ENCODE measurements at regions of chr17 and their contacts with region 1.

Region 1: GRCh38 chr17:79892459-79892858 is 53.2 kb upstream of the CBX4 start:
- DNase-seq: no peak
- CTCF ChIP-seq: no peak

Region 2: DNA sequence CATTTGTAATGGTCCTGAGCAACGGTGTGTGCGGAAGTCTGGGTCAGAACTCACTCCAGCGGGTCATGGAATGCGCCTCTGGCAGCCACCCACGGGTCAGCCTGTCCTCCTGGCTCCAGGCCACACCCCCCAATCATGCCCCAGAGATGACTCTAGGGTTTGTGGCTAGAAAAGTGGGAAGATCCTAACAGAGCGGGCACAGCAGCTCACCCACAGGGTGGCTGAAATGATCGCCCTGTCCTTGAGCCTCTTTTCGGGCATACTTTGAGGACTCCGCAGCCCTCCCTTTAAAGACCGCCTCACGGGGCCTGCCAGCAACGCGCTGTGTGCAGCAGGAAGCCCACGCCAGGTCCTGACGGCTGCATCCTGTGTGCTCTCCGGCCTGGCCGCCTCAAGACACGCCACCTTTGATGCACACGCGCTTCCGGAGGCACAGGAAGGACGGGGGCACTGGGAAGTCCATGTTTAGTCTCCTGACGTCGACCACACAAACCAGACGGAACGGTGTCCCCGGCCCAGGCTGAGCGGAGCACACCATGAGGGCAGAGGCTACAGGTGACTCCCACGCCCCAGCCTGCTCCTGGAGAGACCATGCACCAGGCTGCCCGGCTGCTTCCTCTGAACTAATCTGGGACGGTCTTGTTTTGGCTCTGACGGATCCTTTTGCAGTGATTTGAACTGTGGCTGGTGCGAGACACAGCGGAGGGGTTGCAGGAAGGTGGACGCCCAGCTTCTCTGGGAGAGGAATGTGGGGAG is 50.3 kb after region 1 on chr17:
- in situ Hi-C with region 1: loop called (anchors 10 kb)
- DNase-seq: no peak
- CTCF ChIP-seq: no peak

Region 3: GRCh38 chr17:80316927-80317702 is 424.7 kb after region 1 on chr17:
- in situ Hi-C with region 1: no loop called
- DNase-seq: no peak
- CTCF ChIP-seq: no peak

Measured in GM13977 (cell line).